Right cardiac atrium (tissue), 5 donors: ENCODE measurements at regions of chr19 and their contacts with region 1.

Region 1: DNA sequence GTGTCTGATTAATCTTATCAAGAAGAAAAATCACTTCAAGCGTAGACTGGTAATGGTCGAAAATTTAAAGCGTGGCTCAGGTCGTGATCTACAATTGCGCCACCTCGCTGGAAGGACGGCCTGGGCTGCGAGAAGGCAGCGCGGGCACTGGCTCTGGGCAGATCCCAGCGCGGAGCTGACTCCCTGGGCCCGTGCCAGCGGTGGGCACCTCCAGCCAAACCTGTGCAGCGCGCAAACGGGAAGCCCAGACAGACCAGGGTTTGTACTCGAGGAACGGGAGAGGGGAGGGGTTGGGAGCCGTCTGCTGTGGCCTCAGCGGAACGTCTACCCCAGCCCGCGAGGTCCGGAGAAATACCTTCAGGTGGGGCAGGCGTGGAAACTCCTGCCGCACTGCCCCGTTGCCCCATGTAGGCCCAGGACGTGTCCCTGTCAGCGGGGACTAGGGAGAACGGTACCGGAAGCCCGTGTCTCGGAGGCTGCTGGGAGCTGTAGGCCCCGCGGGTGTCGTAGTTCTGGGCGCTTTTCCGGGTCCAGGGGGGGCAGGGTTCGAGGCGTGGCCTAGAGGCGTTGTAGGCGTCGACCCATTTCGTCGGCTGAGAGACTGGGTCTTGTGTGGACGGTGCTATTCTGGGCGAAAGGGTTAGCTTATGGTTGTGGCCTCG is 21.1 kb downstream of the ZNF274 start:
- DNase-seq: no peak
- ATAC-seq: no peak
- H3K4me3 ChIP-seq: no peak overlapping the region
- H3K27ac ChIP-seq: no peak overlapping the region
- H3K4me1 ChIP-seq: no peaks in the 10 kb centered on the region
- H3K27me3 ChIP-seq: no peaks in the 10 kb centered on the region

Region 2: GRCh38 chr19:58154679-58155648 is 49.0 kb before region 1 on chr19:
- intact Hi-C with region 1: no loop called
- DNase-seq: peak; percentile 98 to 99 (median 99)
- ATAC-seq: peak; percentile 98 to 99
- H3K4me3 ChIP-seq: peak overlapping the region; percentile 82
- H3K27ac ChIP-seq: peak overlapping the region; percentile 82
- H3K4me1 ChIP-seq: peaks cover 7% of the 10 kb centered on the region
- H3K27me3 ChIP-seq: no peaks in the 10 kb centered on the region

Region 3: GRCh38 chr19:58261968-58262921 is 58.3 kb after region 1 on chr19:
- intact Hi-C with region 1: loop called in 1 of 4 experiments (anchors 10 kb)
- DNase-seq: no peak
- ATAC-seq: no peak
- H3K4me3 ChIP-seq: no peak overlapping the region
- H3K27ac ChIP-seq: no peak overlapping the region
- H3K4me1 ChIP-seq: no peaks in the 10 kb centered on the region
- H3K27me3 ChIP-seq: no peaks in the 10 kb centered on the region

Region 4: GRCh38 chr19:58317476-58318072 is 113.6 kb after region 1 on chr19:
- intact Hi-C with region 1: no loop called
- DNase-seq: no peak
- ATAC-seq: no peak
- H3K4me3 ChIP-seq: no peak overlapping the region
- H3K27ac ChIP-seq: no peak overlapping the region
- H3K4me1 ChIP-seq: no peaks in the 10 kb centered on the region
- H3K27me3 ChIP-seq: no peaks in the 10 kb centered on the region